ENCODE measurements at regions of chr7 and their contacts with region 1.

Region 1: GRCh38 chr7:134514663-134515062 is 12.7 kb upstream of the AKR1B10 start:
- DNase-seq: peak; percentile 12
- H3K4me3 ChIP-seq: no peak overlapping the region
- H3K27ac ChIP-seq: no peak overlapping the region
- H3K4me1 ChIP-seq: peaks cover 0 to 4% (median 2%) of the 10 kb centered on the region in 4 donors
- H3K27me3 ChIP-seq: no peaks in the 10 kb centered on the region
- CTCF ChIP-seq: peak; percentile 83 to 88 (median 85)
- EP300 ChIP-seq: no peak
- POLR2A ChIP-seq: no peak

Region 2: DNA sequence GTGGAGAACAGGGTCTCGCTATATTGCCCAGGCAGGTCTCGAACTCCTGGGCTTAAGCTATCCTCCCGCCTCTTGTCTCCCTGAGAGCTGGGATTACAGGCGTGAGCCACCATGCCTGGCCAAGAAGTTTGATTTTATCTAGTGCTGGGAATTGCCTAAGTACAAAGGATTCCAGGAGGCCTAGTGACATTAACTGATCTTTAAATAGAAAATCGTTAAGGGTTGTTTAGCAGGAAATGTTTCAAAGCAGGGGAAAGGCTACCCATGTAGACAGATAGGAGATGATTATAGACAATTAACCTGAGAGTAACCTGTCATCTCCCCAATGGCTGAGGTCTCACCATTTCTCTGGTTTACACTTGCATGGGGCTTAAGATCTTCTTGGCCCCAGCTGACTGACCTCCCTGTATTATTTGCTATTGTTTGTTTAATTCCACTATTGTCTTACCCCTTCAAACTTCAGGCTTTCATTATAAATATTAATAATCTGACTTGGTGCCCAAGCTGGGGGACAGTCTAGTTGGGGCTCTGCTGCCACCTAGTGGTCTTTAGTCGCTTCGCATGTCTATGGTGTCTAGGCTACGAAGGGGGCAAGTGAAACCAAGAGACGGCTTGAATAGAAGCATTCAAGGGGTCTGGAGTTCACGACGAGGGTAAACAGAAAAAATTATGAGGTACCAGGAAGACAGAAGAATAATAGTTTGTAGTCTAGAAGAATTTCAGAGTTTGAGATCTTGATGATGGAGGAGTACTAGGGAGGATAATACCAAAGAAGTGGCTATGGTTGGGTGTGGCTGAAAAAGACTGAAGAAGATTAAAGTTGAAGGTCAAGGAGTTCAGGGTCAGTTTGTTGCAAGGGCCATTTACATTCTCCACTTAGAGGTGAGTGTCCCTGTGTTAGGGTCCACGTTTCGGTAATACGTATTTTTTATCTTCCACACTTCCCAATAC is 91.6 kb after region 1 on chr7:
- in situ Hi-C with region 1: loop called in 2 of 4 experiments (anchors 10 kb)
- intact Hi-C with region 1: loop called (anchors 10 kb)
- DNase-seq: peak; percentile 61
- H3K4me3 ChIP-seq: peak overlapping the region in 1 of 4 donors; percentile 12
- H3K27ac ChIP-seq: no peak overlapping the region
- H3K4me1 ChIP-seq: peaks cover 0 to 8% (median 2%) of the 10 kb centered on the region in 4 donors
- H3K27me3 ChIP-seq: peaks cover 8% of the 10 kb centered on the region
- CTCF ChIP-seq: peak; percentile 79 to 97 (median 90)
- EP300 ChIP-seq: no peak
- POLR2A ChIP-seq: no peak

Measured in transverse colon (tissue), 4 donors.